Gastrocnemius medialis (tissue), 4 donors: ENCODE measurements at regions of chr1 and their contacts with region 1.

Region 1: GRCh38 chr1:212035123-212035834 is at the starts of genes DTL and INTS7:
- DNase-seq: peak; percentile 98 to 99
- ATAC-seq: peak; percentile 95 to 98
- H3K4me3 ChIP-seq: peak within 1 kb of the TSS; percentile 68 to 78 (median 74)
- H3K27ac ChIP-seq: peak within 1 kb of the TSS; percentile 80 to 91 (median 89)
- H3K4me1 ChIP-seq: peaks cover 15 to 20% of the 10 kb centered on the region in 2 donors
- H3K27me3 ChIP-seq: no peaks in the 10 kb centered on the region
- CTCF ChIP-seq: peak; percentile 78 to 97 (median 91)
- POLR2A ChIP-seq: no peak
- total RNA-seq, gene DTL: 0.52 to 1.8 TPM in 2 of 4 donors, not detected in the others
- total RNA-seq, gene INTS7: 4.0 to 8.0 (median 6.6) TPM

Region 2: DNA sequence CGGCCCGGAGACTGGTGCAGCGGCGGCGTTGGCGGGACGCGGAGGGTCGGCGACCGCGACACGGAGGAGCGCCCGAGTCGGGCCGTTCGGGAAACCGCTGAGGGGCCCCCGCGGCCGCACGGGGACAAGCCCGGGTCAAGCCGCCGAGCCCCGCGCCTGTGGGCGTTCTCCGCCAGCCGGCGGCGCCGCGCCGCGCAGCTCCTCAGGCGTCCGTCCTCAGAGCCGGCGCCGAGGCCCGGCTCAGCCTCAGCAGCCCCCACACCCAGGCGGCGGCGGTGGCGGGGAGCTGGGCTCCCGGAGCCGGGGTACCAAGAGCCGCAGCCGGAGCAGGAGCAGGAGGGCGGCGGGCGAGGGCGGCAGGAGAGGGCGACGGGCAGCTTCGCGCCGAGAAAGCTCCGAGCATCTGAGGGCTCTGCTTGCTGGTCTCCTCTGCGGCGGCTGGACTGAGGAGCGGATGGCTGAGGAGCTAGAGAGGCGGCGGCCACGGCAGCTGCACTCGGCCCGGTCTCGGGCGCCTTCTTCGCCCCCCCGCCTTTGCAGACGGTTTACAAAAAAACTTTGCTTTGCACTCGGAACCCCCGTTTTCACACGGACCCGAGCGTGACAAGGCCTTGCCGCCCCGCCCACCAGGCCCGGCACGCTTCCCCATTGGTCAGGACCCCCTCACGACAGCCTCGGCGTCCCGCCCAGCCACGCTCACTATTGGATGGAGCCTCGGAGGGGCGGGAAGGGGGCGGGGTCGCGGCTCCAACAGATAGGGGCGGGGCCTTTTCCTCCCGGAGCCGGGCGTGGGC is 456.4 kb before region 1 on chr1 and contains the start of gene SLC30A1:
- in situ Hi-C with region 1: no loop called
- intact Hi-C with region 1: loop called (anchors 10 kb)
- DNase-seq: peak; percentile 97 to 98
- ATAC-seq: peak; percentile 89
- H3K4me3 ChIP-seq: peak within 1 kb of the TSS; percentile 76 to 88 (median 84)
- H3K27ac ChIP-seq: peak within 1 kb of the TSS; percentile 78 to 90 (median 86)
- H3K4me1 ChIP-seq: peaks cover 26 to 30% of the 10 kb centered on the region in 2 donors
- H3K27me3 ChIP-seq: no peaks in the 10 kb centered on the region
- CTCF ChIP-seq: no peak
- POLR2A ChIP-seq: peak; percentile 77 to 87
- total RNA-seq, gene SLC30A1: 1.3 to 3.0 (median 2.1) TPM

Region 3: GRCh38 chr1:211667065-211667617 is 368.1 kb before region 1 on chr1:
- in situ Hi-C with region 1: no loop called
- intact Hi-C with region 1: no loop called
- DNase-seq: no peak
- ATAC-seq: no peak
- H3K4me3 ChIP-seq: no peak overlapping the region
- H3K27ac ChIP-seq: no peak overlapping the region
- H3K4me1 ChIP-seq: no peaks in the 10 kb centered on the region
- H3K27me3 ChIP-seq: peaks cover 0 to 3% (median 0%) of the 10 kb centered on the region in 3 donors
- CTCF ChIP-seq: no peak
- POLR2A ChIP-seq: no peak

Region 4: GRCh38 chr1:211830330-211831142 is 204.7 kb before region 1 on chr1 and contains the start of gene LPGAT1:
- in situ Hi-C with region 1: no loop called
- intact Hi-C with region 1: loop called (anchors 1 kb)
- DNase-seq: peak; percentile 61 to 63
- ATAC-seq: peak; percentile 87 to 89
- H3K4me3 ChIP-seq: peak within 1 kb of the TSS; percentile 62 to 85 (median 68)
- H3K27ac ChIP-seq: peak within 1 kb of the TSS; percentile 74 to 92 (median 88)
- H3K4me1 ChIP-seq: peaks cover 13 to 17% of the 10 kb centered on the region in 2 donors
- H3K27me3 ChIP-seq: no peaks in the 10 kb centered on the region
- CTCF ChIP-seq: peak; percentile 51 to 87 (median 65)
- POLR2A ChIP-seq: peak; percentile 22 to 44
- total RNA-seq, gene LPGAT1: 11.2 to 51.4 (median 21.5) TPM

Region 5: DNA sequence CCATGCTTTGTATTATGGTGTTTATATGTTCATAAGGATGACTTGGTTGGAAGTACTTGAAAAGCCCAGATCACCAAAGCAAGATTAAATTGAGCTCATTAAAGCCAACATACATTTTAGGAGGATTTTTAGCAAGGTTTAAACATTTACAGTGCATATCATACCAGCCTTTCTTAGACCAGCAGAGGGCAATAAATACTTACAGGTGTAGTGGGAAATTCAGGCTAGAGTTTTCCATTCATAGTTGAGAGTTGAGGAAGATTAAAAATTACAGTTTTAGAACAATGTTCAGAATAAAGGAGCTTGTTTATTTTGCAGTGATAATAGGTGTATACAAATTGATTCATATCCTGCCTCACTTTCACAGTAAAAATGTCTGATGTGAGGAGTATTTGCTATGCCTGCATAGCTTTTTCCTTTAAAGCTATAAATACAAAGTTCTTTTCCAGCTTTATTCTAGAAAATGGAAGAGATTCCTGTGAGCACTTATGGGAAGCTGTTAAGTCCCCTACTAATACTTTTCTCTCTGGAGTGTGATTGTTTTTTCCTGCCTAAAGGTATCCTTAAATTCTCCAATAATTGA is 35.5 kb after region 1 on chr1:
- in situ Hi-C with region 1: no loop called
- intact Hi-C with region 1: loop called (anchors 2 kb)
- DNase-seq: no peak
- ATAC-seq: peak; percentile 51 to 64
- H3K4me3 ChIP-seq: no peak overlapping the region
- H3K27ac ChIP-seq: peak overlapping the region in 3 of 4 donors; percentile 9 to 40 (median 17)
- H3K4me1 ChIP-seq: peaks cover 10 to 22% of the 10 kb centered on the region in 2 donors
- H3K27me3 ChIP-seq: no peaks in the 10 kb centered on the region
- CTCF ChIP-seq: peak; percentile 72 to 96 (median 84)
- POLR2A ChIP-seq: no peak

Region 6: GRCh38 chr1:212353181-212353580 is 317.9 kb after region 1 on chr1:
- in situ Hi-C with region 1: no loop called
- intact Hi-C with region 1: no loop called
- DNase-seq: no peak
- ATAC-seq: no peak
- H3K4me3 ChIP-seq: no peak overlapping the region
- H3K27ac ChIP-seq: no peak overlapping the region
- H3K4me1 ChIP-seq: no peaks in the 10 kb centered on the region
- H3K27me3 ChIP-seq: no peaks in the 10 kb centered on the region
- CTCF ChIP-seq: no peak
- POLR2A ChIP-seq: no peak

Region 7: DNA sequence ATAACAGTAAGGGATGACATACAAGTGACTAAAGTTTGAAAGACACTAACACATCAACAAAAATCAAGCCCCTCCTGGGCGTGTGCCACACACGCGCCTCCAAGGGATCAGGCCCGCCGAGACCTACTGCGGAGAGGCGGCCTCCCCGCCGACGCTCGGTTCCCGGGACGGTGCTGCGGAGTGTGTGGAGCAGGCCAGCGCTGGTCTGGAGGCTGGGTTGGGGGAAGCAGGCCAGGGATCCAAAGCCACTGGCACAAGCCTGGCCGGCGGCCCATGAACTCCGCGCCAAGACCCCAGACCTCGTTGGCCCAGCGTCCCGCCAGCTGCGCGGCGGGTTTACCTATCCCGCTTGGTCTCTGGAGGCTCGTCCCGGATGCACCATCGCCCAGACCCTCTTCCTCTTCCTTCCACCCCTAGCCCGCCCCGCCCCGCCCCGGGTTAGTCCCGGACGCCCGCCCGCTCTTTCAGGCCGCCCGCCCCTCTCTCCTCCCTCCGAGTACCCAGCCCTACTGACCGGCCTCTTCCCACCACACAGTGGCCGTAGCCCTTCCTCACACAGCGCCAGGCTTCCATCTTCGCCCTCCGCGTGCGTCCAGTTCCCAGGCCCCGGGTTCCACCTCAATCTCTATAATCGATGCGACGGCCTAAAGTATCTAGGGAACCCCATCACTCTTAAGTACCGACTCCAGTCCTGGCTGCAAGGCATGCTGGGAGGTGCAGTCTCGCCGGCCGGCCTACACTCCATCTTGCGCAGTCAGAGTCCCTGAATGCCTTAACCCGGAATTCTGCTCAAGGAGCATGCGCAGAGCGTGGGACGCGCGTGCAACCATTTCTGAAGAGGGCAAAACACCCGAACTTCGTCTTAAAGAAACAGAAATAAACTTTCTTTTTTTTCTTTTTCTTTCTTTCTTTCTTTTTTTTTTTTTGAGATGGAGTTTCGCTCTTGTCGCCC is 980.1 kb after region 1 on chr1 and contains the start of gene ANGEL2:
- in situ Hi-C with region 1: loop called in 1 of 4 experiments (anchors 25 kb)
- intact Hi-C with region 1: no loop called
- DNase-seq: peak; percentile 92 to 96
- ATAC-seq: peak; percentile 99 to 100
- H3K4me3 ChIP-seq: peak within 1 kb of the TSS; percentile 64 to 96 (median 90)
- H3K27ac ChIP-seq: peak within 1 kb of the TSS; percentile 81 to 92 (median 86)
- H3K4me1 ChIP-seq: peaks cover 16 to 20% of the 10 kb centered on the region in 2 donors
- H3K27me3 ChIP-seq: no peaks in the 10 kb centered on the region
- CTCF ChIP-seq: no peak
- POLR2A ChIP-seq: peak in 1 of 2 donors; percentile 27
- total RNA-seq, gene ANGEL2: 17.7 to 33.2 (median 25.1) TPM